HCT116 (cell line): ENCODE measurements at regions of chr4 and their contacts with region 1.

Region 1: DNA sequence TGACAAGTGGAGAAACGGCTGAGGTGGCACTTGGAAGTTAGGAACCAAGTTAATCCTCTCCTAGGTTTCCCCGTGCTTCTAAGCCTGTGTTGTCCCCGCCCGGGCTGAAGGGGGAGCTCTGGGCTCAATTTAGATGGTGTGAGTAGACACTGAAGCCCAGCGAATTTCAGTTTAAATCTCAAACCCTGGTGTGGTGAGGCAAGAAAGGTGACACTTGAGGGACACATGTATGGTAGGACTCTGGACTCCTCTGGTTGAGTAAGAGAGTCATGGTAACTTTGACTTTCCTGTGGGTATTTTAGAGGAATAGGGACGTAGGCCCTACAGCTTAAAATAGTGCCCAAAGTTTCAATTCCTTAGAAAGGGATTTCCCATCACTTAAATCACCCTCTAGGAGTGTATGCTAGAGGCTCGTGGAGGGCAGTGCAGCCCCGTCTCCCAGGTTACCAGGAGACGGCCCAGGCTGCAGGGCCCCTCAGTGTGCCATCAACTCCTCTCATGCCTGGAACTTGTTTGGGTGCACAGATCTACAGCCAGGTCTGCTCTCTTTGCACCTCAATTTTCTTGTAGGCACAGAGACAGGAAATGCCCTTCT is 24.0 kb downstream of the HAND2 start:
- DNase-seq: peak; percentile 56
- ATAC-seq: peak; percentile 98
- H3K4me3 ChIP-seq: no peak overlapping the region
- H3K27ac ChIP-seq: no peak overlapping the region
- H3K4me1 ChIP-seq: no peaks in the 10 kb centered on the region
- H3K27me3 ChIP-seq: no peaks in the 10 kb centered on the region
- CTCF ChIP-seq: peak; percentile 80 to 91 (median 89)
- POLR2A ChIP-seq: no peak
- RAD21 ChIP-seq: peak; percentile 87

Region 2: DNA sequence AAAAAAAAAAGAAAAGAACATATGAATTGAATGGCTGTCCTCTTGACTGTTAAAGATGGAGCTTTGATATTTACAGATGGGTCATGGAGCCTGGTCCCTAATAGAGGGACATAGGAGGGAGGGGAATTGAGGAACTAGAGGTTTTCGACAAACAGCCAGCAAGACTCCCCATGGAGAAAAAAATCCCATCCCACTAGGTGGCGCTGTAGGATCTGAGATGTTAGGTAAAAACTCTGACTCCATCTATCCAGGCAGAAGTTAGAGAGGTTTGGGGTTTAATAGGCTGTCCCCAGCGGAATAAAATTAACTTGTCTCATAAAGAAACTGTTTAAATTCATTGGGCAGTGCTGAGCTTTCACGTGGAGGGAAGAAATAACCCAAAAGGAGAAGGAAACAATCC is 217.7 kb before region 1 on chr4:
- CTCF ChIA-PET with region 1: no interaction called
- POLR2A ChIA-PET with region 1: no interaction called
- RAD21 ChIA-PET with region 1: no interaction called
- intact Hi-C with region 1: no loop called
- DNase-seq: peak; percentile 37
- ATAC-seq: 0 out of 2 replicates have a peak, but pooled peaks have one; percentile 34
- H3K4me3 ChIP-seq: no peak overlapping the region
- H3K27ac ChIP-seq: no peak overlapping the region
- H3K4me1 ChIP-seq: no peaks in the 10 kb centered on the region
- H3K27me3 ChIP-seq: no peaks in the 10 kb centered on the region
- CTCF ChIP-seq: peak; percentile 21 to 64 (median 32); a peak in 4 of 6 replicates
- POLR2A ChIP-seq: no peak
- RAD21 ChIP-seq: peak; percentile 24; the same call in 1 of the 2 replicates

Region 3: GRCh38 chr4:173466101-173466500 is 39.9 kb before region 1 on chr4:
- CTCF ChIA-PET with region 1: no interaction called
- POLR2A ChIA-PET with region 1: no interaction called
- RAD21 ChIA-PET with region 1: no interaction called
- intact Hi-C with region 1: no loop called
- DNase-seq: no peak
- ATAC-seq: no peak
- H3K4me3 ChIP-seq: no peak overlapping the region
- H3K27ac ChIP-seq: no peak overlapping the region
- H3K4me1 ChIP-seq: no peaks in the 10 kb centered on the region
- H3K27me3 ChIP-seq: no peaks in the 10 kb centered on the region
- CTCF ChIP-seq: no peak
- POLR2A ChIP-seq: no peak
- RAD21 ChIP-seq: no peak

Region 4: GRCh38 chr4:173752610-173753230 is 246.7 kb after region 1 on chr4:
- CTCF ChIA-PET with region 1: interaction called, 8 read pairs
- POLR2A ChIA-PET with region 1: no interaction called
- RAD21 ChIA-PET with region 1: no interaction called
- intact Hi-C with region 1: loop called (anchors 5 kb)
- DNase-seq: peak; percentile 58
- ATAC-seq: peak; percentile 78
- H3K4me3 ChIP-seq: no peak overlapping the region
- H3K27ac ChIP-seq: no peak overlapping the region
- H3K4me1 ChIP-seq: no peaks in the 10 kb centered on the region
- H3K27me3 ChIP-seq: peaks cover 5% of the 10 kb centered on the region; the same call in 1 of the 2 replicates
- CTCF ChIP-seq: peak; percentile 30 to 91 (median 83); a peak in 5 of 6 replicates
- POLR2A ChIP-seq: no peak
- RAD21 ChIP-seq: peak; percentile 38

Region 5: GRCh38 chr4:173827707-173828106 is 321.7 kb after region 1 on chr4:
- CTCF ChIA-PET with region 1: no interaction called
- POLR2A ChIA-PET with region 1: no interaction called
- RAD21 ChIA-PET with region 1: no interaction called
- intact Hi-C with region 1: loop called (anchors 2 kb)
- DNase-seq: peak; percentile 4
- ATAC-seq: peak; percentile 58
- H3K4me3 ChIP-seq: no peak overlapping the region
- H3K27ac ChIP-seq: no peak overlapping the region
- H3K4me1 ChIP-seq: no peaks in the 10 kb centered on the region
- H3K27me3 ChIP-seq: peaks cover 10% of the 10 kb centered on the region; the same call in 1 of the 2 replicates
- CTCF ChIP-seq: 0 out of 6 replicates have a peak, but pooled peaks of 1 of the 3 experiments have one; percentile 27
- POLR2A ChIP-seq: no peak
- RAD21 ChIP-seq: peak; percentile 24; the same call in 1 of the 2 replicates

Region 6: DNA sequence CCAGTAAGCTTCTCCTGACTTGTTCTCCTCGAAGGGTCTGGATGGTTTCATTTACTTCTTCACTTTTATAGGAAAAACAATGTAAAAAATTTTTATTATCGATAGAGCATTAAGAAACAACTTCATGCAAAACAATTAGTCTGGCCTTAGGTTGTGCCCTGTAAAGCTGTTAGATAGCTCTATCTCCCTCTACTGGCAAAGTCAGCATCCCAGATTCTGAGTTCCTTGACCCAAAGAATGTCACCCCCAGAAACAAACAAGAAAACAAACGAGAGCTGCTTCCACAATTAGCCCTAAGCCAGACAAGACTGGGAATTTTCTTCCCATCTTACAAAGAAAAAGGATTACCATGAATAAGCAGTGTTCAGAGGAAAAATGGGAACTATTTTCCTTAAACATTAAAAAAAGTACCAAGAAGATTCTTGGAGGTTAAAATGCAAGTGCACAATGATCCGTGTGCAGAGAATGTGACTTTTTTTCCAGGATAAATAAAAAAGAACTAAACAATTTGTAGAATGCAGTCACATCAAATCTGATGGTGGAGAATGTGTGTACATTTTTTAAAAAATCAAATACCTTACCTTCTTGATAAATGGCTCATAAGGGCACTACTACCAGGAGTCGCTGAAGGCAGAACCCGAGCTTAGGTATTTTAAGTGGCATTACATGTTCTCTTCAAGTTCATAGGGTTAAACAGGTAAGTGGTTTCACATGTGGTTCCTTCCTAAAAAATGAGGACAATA is 484.3 kb after region 1 on chr4:
- CTCF ChIA-PET with region 1: interaction called, 8 read pairs
- POLR2A ChIA-PET with region 1: no interaction called
- RAD21 ChIA-PET with region 1: no interaction called
- intact Hi-C with region 1: loop called (anchors 2 kb)
- DNase-seq: peak; percentile 24
- ATAC-seq: peak; percentile 66
- H3K4me3 ChIP-seq: no peak overlapping the region
- H3K27ac ChIP-seq: no peak overlapping the region
- H3K4me1 ChIP-seq: no peaks in the 10 kb centered on the region
- H3K27me3 ChIP-seq: peaks cover 12% of the 10 kb centered on the region
- CTCF ChIP-seq: peak; percentile 10 to 61 (median 57); a peak in 4 of 6 replicates
- POLR2A ChIP-seq: no peak
- RAD21 ChIP-seq: peak; percentile 51

Region 7: GRCh38 chr4:174120446-174121295 is 614.6 kb after region 1 on chr4:
- CTCF ChIA-PET with region 1: interaction called, 7 read pairs
- POLR2A ChIA-PET with region 1: no interaction called
- RAD21 ChIA-PET with region 1: no interaction called
- intact Hi-C with region 1: loop called (anchors 1 kb)
- DNase-seq: peak; percentile 66
- ATAC-seq: peak; percentile 95
- H3K4me3 ChIP-seq: peak overlapping the region in 1 of 2 experiments; percentile 11; a peak in 2 of 4 replicates
- H3K27ac ChIP-seq: no peak overlapping the region
- H3K4me1 ChIP-seq: peaks cover 0 to 2% of the 10 kb centered on the region in 2 experiments; a peak in 1 of 4 replicates
- H3K27me3 ChIP-seq: peaks cover 51% of the 10 kb centered on the region
- CTCF ChIP-seq: peak; percentile 39 to 57 (median 50); a peak in 5 of 6 replicates
- POLR2A ChIP-seq: no peak
- RAD21 ChIP-seq: peak; percentile 48

Region 8: GRCh38 chr4:174156239-174156826 is 650.3 kb after region 1 on chr4:
- CTCF ChIA-PET with region 1: interaction called, 3 read pairs
- POLR2A ChIA-PET with region 1: no interaction called
- RAD21 ChIA-PET with region 1: no interaction called
- intact Hi-C with region 1: loop called (anchors 2 kb)
- DNase-seq: peak; percentile 48
- ATAC-seq: peak; percentile 82
- H3K4me3 ChIP-seq: no peak overlapping the region
- H3K27ac ChIP-seq: no peak overlapping the region
- H3K4me1 ChIP-seq: no peaks in the 10 kb centered on the region
- H3K27me3 ChIP-seq: peaks cover 56% of the 10 kb centered on the region
- CTCF ChIP-seq: peak; percentile 45 to 66 (median 60); a peak in 5 of 6 replicates
- POLR2A ChIP-seq: no peak
- RAD21 ChIP-seq: peak; percentile 66

Region 9: DNA sequence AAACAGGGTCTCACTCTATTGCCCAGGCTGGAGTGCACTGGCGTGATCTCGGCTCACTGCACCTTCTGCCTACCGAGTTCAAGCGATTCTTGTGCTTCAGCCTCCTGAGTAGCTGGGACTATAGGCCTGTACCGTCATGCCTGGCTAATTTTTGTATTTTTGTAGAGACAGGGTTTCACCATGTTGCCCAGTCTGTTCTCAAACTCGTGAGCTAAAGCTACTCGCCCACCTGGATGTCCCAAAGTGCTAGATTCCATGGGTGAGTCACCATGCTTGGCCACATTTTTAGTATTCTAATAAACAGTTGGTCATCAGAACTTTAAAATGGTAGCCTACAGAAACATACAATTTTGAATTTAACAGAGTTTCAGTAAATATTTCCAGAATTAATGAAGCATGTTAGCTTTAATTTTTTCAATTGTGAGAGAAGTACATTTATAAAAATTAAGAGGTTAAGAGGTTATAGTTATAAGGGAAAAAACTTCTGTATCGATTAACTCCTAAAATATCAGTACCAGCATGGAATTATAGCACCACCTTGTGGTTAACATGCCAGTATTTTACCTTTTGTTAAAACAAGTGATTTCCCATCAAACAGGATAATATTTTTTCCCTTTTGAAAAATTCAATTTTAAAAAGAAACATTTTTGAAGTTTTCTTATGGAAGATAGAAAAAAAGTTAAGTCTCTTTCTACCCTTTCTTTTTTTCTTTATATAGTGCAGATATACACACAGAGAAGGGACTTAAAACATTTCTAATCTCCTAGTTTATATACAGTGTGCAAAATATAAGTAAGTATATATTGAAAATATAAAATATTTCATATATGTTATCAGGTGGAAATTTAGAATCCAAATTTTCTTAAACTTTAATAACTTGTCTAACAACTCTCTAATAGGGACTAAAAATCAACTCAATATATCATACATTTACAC is 813.1 kb after region 1 on chr4:
- CTCF ChIA-PET with region 1: interaction called, 7 read pairs
- POLR2A ChIA-PET with region 1: no interaction called
- RAD21 ChIA-PET with region 1: no interaction called
- intact Hi-C with region 1: loop called (anchors 2 kb)
- DNase-seq: peak; percentile 22
- ATAC-seq: no peak
- H3K4me3 ChIP-seq: no peak overlapping the region
- H3K27ac ChIP-seq: no peak overlapping the region
- H3K4me1 ChIP-seq: no peaks in the 10 kb centered on the region
- H3K27me3 ChIP-seq: no peaks in the 10 kb centered on the region
- CTCF ChIP-seq: peak; percentile 51 to 77 (median 51); a peak in 4 of 6 replicates
- POLR2A ChIP-seq: no peak
- RAD21 ChIP-seq: peak; percentile 68